ENCODE measurements at regions of chr6 and their contacts with region 1.

Region 1: GRCh38 chr6:134009876-134010275 is 42.5 kb downstream of the SLC2A12 start:
- DNase-seq: no peak
- H3K4me3 Mint-ChIP-seq: no peak overlapping the region
- H3K27ac Mint-ChIP-seq: no peak overlapping the region
- H3K4me1 Mint-ChIP-seq: peaks cover 10% of the 10 kb centered on the region
- H3K27me3 Mint-ChIP-seq: peaks cover 13% of the 10 kb centered on the region

Region 2: DNA sequence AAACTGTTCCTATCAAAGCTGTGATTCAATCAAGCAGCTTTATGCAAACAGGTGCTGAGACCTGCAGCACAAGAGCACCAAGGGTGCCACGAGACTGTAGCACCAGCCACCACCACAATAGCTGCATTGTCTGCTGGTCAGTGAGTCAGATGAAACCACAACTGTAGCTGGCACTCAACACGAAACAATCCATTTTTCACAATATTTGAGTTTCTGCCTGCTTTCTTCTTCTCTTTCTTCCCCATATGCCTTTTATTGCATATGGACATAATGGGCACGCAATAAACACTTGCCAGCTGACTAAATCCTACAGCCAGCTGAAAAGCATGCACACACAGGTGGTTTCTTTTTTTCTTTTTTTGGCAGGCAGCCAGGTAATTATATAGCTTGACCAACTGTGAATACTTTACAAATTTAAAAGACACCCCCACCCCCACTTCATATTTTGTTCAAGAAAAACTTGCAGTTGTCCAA is 26.0 kb after region 1 on chr6:
- intact Hi-C with region 1: loop called (anchors 2 kb)
- DNase-seq: no peak
- H3K4me3 Mint-ChIP-seq: no peak overlapping the region
- H3K27ac Mint-ChIP-seq: no peak overlapping the region
- H3K4me1 Mint-ChIP-seq: peaks cover 22% of the 10 kb centered on the region
- H3K27me3 Mint-ChIP-seq: peaks cover 27% of the 10 kb centered on the region

Region 3: GRCh38 chr6:134047673-134048072 is 37.8 kb after region 1 on chr6:
- intact Hi-C with region 1: loop called (anchors 5 kb)
- DNase-seq: no peak
- H3K4me3 Mint-ChIP-seq: no peak overlapping the region
- H3K27ac Mint-ChIP-seq: no peak overlapping the region
- H3K4me1 Mint-ChIP-seq: peaks cover 12% of the 10 kb centered on the region
- H3K27me3 Mint-ChIP-seq: peaks cover 32% of the 10 kb centered on the region

Region 4: GRCh38 chr6:135423649-135424128 is 1413.8 kb after region 1 on chr6:
- intact Hi-C with region 1: no loop called
- DNase-seq: no peak
- H3K4me3 Mint-ChIP-seq: no peak overlapping the region
- H3K27ac Mint-ChIP-seq: peak overlapping the region; percentile 38
- H3K4me1 Mint-ChIP-seq: peaks cover 32% of the 10 kb centered on the region
- H3K27me3 Mint-ChIP-seq: no peaks in the 10 kb centered on the region